ENCODE measurements at regions of chr13 and their contacts with region 1.

Region 1: GRCh38 chr13:45105891-45106317 is 14.4 kb upstream of the GTF2F2 start:
- DNase-seq: peak in 1 of 2 experiments; percentile 76
- H3K4me3 ChIP-seq: no peak overlapping the region
- H3K27ac ChIP-seq: no peak overlapping the region
- H3K4me1 ChIP-seq: peaks cover 18% of the 10 kb centered on the region
- H3K27me3 ChIP-seq: no peaks in the 10 kb centered on the region
- CTCF ChIP-seq: no peak

Region 2: GRCh38 chr13:45092663-45093062 is 13.2 kb before region 1 on chr13:
- CTCF ChIA-PET with region 1: no interaction called
- POLR2A ChIA-PET with region 1: interaction called, 16 read pairs
- intact Hi-C with region 1: no loop called
- DNase-seq: no peak
- H3K4me3 ChIP-seq: no peak overlapping the region
- H3K27ac ChIP-seq: no peak overlapping the region
- H3K4me1 ChIP-seq: no peaks in the 10 kb centered on the region
- H3K27me3 ChIP-seq: no peaks in the 10 kb centered on the region
- CTCF ChIP-seq: no peak

Region 3: GRCh38 chr13:45249662-45250061 is 143.8 kb after region 1 on chr13:
- CTCF ChIA-PET with region 1: no interaction called
- POLR2A ChIA-PET with region 1: interaction called, 12 read pairs
- intact Hi-C with region 1: no loop called
- DNase-seq: no peak
- H3K4me3 ChIP-seq: no peak overlapping the region
- H3K27ac ChIP-seq: no peak overlapping the region
- H3K4me1 ChIP-seq: peaks cover 14% of the 10 kb centered on the region
- H3K27me3 ChIP-seq: no peaks in the 10 kb centered on the region
- CTCF ChIP-seq: no peak